ENCODE measurements at regions of chr11 and their contacts with region 1.

Region 1: GRCh38 chr11:112837162-112837826 is 123.9 kb upstream of the NCAM1 start:
- DNase-seq: no peak
- ATAC-seq: peak; percentile 56

Region 2: DNA sequence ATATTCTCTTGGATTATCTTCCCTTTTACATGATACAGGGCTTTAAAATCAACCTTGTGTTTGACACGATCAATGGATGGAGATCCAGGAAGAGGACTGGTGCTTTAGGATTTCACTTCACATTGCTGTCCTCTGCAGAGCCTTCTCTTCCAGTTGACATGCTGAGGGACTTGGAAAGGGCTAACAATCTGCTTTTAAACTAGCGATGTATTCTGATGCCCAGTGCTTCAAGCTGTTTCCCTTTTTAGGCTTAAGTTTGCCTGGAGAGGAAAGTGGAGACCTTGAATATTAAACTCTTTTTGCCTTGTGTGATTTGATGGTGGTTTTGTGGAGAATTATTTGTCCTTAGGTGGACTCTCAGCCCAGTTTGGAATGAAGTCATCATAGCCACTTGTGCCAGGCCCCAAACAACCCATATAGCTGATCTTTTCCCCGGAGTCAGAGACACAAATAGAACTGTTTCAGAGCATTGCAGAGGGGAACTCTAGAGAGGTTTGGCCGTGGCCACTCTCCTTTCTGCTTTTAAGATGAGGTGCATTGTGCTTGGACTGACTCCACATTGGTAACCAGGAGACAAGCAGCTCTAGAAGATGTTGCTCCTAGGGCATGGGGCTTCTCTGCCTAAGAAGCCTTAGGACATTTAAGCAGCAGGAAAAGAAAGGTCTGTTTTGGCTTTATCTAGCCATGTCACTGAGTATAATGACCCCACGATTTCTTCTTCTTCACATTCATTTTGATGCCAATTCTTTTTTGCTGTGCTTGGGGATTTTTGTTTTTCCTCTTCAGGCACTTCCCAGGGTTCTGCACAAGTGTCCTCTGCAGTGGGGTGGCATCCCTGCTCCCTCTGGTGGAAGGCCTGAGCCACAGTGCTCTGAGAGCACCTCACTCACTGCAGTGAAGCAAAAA is 276.8 kb after region 1 on chr11:
- intact Hi-C with region 1: loop called (anchors 5 kb)
- DNase-seq: no peak
- ATAC-seq: peak; percentile 85

Region 3: GRCh38 chr11:113261709-113262475 is 424.6 kb after region 1 on chr11:
- intact Hi-C with region 1: loop called (anchors 10 kb)
- DNase-seq: no peak
- ATAC-seq: peak; percentile 53

Measured in Right ventricle myocardium inferior (tissue), 1 donor.